Activated B cell treated with CpG ODN at 0.5 μM for 24 hours (primary cell): ENCODE measurements at regions of chr6 and their contacts with region 1.

Region 1: GRCh38 chr6:107033126-107033525 is 5.1 kb downstream of the MTRES1 start:
- DNase-seq: no peak
- ATAC-seq: no peak
- H3K4me3 Mint-ChIP-seq: no peak overlapping the region
- H3K27ac Mint-ChIP-seq: no peak overlapping the region
- H3K4me1 Mint-ChIP-seq: peaks cover 21% of the 10 kb centered on the region
- H3K27me3 Mint-ChIP-seq: no peaks in the 10 kb centered on the region
- CTCF ChIP-seq: no peak

Region 2: GRCh38 chr6:106973836-106974330 is 59.2 kb before region 1 on chr6:
- CTCF ChIA-PET with region 1: no interaction called
- POLR2A ChIA-PET with region 1: no interaction called
- intact Hi-C with region 1: loop called (anchors 1 kb)
- DNase-seq: no peak
- ATAC-seq: peak; percentile 10
- H3K4me3 Mint-ChIP-seq: peak overlapping the region; percentile 93
- H3K27ac Mint-ChIP-seq: peak overlapping the region; percentile 85
- H3K4me1 Mint-ChIP-seq: peaks cover 39% of the 10 kb centered on the region
- H3K27me3 Mint-ChIP-seq: no peaks in the 10 kb centered on the region
- CTCF ChIP-seq: no peak

Region 3: DNA sequence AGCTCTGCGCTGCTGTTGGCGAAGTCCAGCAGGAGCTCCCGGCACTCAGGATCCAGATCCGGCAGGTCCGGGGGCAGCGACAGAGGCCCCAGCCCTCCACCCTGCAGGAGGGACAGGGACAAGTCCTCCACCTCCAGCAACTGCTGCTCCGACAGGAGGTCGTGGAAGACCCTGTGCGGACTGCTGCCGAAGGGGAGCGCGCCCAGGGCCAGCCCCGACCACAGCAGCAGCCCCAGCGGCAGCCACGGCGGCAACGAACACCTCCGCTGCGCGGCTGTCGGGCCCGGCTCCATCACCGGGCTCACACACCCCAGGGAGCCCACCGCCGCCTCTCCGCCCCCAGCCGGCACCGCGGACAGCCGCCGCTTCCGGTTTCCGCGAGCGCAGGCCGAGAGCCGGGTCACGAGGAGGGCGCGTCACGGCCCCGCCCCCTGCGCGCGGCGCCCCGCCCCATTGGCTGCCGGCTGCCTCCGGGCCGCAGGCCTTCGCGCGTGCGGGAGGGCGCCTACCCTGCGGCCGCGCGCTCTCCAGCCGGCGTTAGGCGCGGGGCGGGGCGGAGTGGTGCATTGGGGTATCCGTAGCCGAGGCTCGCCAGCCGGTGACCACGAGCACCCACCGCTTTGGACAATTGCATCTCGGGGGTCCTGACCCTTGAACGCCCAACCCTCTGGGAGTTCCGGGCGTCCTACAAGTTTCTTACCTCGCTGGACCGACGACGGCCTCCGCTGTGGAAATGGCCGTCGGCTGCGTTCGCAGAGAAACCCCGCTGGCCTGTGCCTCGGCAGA is 1041.4 kb after region 1 on chr6 and contains the start of gene OSTM1:
- CTCF ChIA-PET with region 1: no interaction called
- POLR2A ChIA-PET with region 1: no interaction called
- intact Hi-C with region 1: loop called (anchors 2 kb)
- DNase-seq: peak; percentile 98
- ATAC-seq: peak; percentile 96
- H3K4me3 Mint-ChIP-seq: peak within 1 kb of the TSS; percentile 87
- H3K27ac Mint-ChIP-seq: peak within 1 kb of the TSS; percentile 89
- H3K4me1 Mint-ChIP-seq: peaks cover 32% of the 10 kb centered on the region
- H3K27me3 Mint-ChIP-seq: peaks cover 2% of the 10 kb centered on the region
- CTCF ChIP-seq: no peak
- total RNA-seq, gene OSTM1: 17.6 and 21.4 TPM in 2 replicates